ENCODE measurements at regions of chr12 and their contacts with region 1.

Region 1: DNA sequence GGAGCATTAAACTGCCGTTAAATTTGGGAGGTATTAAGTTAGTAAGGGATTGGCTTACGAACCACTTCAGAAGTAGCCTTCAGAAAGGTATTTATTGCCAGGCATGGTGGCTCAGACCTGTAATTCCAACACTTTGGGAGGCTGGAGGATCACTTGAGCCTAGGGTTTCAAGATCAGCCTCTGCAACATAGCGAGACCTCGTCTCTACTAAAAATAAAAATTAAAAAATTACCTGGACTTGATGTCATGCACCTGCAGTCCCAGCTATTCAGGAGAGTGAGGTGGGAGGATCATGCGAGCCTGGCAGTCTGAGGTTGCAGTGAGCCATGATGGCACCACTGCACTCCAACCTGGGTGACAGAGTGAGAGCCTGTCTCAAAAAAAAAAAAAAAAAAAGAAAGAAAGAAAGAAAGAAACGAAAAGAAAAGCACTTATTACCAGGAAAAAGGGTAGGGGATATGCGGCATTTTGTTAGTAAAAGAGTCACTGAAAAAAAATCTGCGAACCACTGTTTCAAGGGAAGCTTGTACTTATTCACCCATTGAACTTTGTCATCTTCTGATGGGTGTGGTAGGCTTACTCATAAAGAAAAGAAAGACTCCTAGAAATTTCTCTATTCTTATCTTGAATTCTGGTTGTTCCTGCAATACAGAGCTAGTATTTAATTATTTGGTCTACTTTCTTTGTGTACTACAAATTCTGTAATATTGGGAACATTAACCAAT is 33.6 kb upstream of the PLEKHA5 start:
- DNase-seq: peak; percentile 61
- H3K27ac ChIP-seq: no peak overlapping the region
- CTCF ChIP-seq: no peak

Region 2: DNA sequence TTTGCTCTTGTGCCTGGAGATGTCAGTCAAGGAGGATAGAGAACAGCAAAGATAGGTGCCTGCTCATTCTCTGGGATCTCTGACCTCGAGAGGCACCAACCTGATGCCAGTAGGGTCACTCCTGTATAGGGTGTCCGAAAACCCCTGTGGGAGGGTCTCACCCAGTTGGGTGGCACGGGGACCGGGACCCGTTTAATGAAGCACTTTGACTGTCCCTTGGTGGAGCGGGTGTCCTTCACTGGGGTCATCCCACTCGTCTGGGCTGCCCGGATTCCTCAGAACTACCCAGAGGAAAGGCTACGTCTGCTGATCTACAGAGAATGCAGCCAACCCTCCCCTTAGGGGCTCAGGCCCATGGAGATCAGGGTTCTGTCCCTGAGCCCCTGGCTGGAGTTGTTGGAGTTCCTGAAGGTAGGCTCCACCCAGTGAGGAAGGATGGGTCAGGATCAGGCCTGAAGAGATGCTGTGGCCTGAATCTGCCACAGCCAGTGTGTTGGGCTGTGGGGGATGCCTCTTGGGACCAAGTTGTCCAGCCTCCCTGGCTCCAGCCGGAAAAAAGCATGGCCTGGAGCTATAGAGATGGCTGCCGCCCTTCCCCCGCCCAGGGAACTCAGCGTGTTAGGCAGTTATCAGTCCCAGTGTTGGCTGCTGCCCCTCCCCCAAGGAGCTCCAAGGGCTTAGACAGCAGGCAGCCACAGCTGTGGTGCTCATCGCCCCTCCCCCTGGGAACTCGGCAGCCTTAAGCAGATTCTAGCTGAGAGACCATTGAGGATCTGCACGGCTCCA is 200.2 kb before region 1 on chr12:
- CTCF ChIA-PET with region 1: no interaction called
- POLR2A ChIA-PET with region 1: no interaction called
- DNase-seq: no peak
- H3K27ac ChIP-seq: no peak overlapping the region
- CTCF ChIP-seq: no peak

Region 3: DNA sequence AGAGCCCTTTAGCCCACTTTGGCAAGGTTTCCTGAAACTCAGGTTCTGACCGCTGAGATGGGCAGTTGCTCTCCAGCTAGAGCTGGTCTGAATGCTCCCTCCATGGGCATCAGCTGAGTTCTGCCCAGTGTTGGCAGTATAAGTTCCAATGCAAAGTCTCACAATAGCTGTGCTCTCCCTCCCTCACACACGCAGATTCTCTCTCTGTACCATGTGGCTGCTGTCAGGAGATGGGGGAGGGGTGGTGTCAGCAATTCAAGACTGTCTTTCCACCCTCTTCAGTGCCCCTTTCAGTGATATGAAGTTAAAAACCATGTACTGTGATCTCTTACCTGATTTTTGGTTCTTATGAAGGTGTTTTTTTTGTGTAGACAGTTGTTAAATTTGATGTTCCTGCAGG is 130.7 kb before region 1 on chr12:
- CTCF ChIA-PET with region 1: interaction called, 10 read pairs
- POLR2A ChIA-PET with region 1: no interaction called
- DNase-seq: no peak
- H3K27ac ChIP-seq: no peak overlapping the region
- CTCF ChIP-seq: no peak

Measured in RWPE1 (cell line).